Adrenal gland (tissue), 19 donors: ENCODE measurements at regions of chr6 and their contacts with region 1.

Region 1: GRCh38 chr6:120248451-120248850 is 898.9 kb upstream of the MAN1A1 start:
- DNase-seq: no peak
- H3K4me3 ChIP-seq: no peak overlapping the region
- H3K27ac ChIP-seq: no peak overlapping the region
- H3K4me1 ChIP-seq: no peaks in the 10 kb centered on the region
- H3K27me3 ChIP-seq: no peaks in the 10 kb centered on the region
- CTCF ChIP-seq: no peak
- POLR2A ChIP-seq: no peak

Region 2: DNA sequence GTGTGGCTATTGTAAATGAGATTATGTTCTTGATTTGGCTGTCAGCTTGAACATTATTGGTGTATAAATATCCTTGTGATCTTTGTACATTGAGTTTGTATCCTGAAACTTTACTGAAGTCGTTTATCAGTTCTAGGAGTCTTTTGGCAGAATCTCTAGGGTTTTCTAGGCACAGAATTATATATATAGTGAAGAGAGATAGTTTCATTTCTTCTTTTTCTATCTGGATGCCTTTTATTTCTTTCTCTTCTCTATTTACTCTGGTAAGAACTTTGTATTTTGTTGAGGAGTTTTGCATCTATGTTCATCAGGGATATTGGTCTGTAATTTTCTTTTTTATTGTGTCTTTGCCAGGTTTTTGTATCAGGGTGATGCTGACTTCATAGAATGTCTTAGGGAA is 309.7 kb before region 1 on chr6:
- intact Hi-C with region 1: no loop called
- DNase-seq: no peak
- H3K4me3 ChIP-seq: no peak overlapping the region
- H3K27ac ChIP-seq: no peak overlapping the region
- H3K4me1 ChIP-seq: no peaks in the 10 kb centered on the region
- H3K27me3 ChIP-seq: no peaks in the 10 kb centered on the region
- CTCF ChIP-seq: no peak
- POLR2A ChIP-seq: no peak

Region 3: DNA sequence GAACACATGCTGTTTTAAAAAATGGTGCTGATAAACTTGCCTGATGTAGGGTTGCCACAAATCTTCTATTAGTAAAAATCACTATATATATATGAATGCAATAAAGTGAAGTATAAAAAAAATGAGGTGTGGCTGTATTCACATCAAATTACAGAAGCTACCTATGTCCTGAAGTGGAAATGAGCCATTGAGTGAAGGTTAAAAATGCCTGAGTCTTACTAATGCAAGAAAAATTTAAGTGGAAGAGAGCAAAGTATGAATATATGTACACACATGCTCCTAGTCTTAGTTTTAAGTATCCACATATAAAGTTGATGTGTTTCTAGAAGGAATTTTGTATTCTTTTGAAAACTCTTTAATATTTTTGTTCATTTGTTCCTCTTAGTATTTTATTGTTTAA is 90.6 kb before region 1 on chr6:
- intact Hi-C with region 1: no loop called
- DNase-seq: no peak
- H3K4me3 ChIP-seq: no peak overlapping the region
- H3K27ac ChIP-seq: no peak overlapping the region
- H3K4me1 ChIP-seq: no peaks in the 10 kb centered on the region
- H3K27me3 ChIP-seq: no peaks in the 10 kb centered on the region
- CTCF ChIP-seq: no peak
- POLR2A ChIP-seq: no peak

Region 4: DNA sequence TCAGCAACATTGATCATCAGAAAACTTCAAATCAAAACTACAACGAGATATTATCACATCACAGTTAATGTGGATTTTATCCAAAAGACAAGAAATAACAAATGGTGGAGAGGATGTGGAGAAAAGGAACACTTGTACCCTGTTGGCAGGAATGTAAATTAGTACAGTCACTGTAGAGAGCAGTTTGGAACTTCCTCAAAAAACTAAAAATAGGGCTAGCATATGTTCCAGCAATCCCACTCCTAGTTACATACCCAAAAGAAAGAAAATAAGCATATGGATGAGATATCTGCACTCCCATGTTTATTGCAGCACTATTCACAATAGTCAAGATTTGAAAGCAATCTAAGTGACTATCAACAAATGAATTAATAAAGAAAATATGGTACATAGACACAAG is 11.2 kb before region 1 on chr6:
- intact Hi-C with region 1: loop called in 1 of 2 experiments (anchors 2 kb)
- DNase-seq: no peak
- H3K4me3 ChIP-seq: no peak overlapping the region
- H3K27ac ChIP-seq: no peak overlapping the region
- H3K4me1 ChIP-seq: no peaks in the 10 kb centered on the region
- H3K27me3 ChIP-seq: no peaks in the 10 kb centered on the region
- CTCF ChIP-seq: no peak
- POLR2A ChIP-seq: no peak